Posterior cingulate gyrus (tissue), 11 donors: ENCODE measurements at regions of chr7 and their contacts with region 1.

Region 1: GRCh38 chr7:71733107-71733870 is 601.3 kb downstream of the GALNT17 start:
- DNase-seq: peak; percentile 69 to 97 (median 86)

Region 2: GRCh38 chr7:70829221-70830059 is 903.8 kb before region 1 on chr7:
- intact Hi-C with region 1: loop called (anchors 1 kb)
- DNase-seq: peak; percentile 68 to 95 (median 83)

Region 3: DNA sequence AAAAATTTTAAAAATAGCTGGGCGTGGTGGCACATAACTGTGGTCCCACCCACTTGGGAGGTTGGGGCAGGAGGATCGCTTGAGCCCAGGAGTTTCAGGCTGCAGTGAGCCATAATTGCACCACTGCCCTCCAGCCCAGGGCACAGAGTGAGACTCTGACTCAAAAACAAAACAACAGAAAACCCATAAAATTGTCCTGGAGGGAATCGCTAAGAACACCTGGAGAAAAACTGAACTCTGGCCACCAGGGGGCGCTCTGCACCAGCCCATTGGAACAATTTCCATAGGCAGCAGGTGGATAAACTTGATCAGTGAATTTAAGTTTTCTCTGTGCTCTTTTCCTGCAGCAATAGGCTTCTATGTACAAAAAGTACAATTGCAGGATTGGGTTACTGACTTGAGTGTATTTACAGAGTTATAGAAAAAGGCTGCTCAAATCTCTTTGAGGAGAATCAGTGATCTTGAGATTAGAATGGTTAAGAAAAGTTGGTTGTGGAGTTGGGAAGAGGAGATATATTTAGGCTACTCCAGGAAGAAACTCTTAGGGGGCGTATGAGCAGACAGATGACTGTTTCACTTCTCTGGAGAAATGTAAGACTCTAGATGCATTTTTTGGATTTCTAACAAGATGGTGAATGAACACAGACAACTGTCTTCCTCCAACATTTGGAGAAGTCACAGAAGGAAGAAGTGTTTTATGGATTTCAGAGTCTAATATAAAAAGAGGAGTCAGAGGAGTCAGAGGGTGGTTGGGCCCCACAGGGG is 876.2 kb before region 1 on chr7:
- intact Hi-C with region 1: loop called (anchors 1 kb)
- DNase-seq: peak; percentile 65 to 97 (median 86)